CD8-positive, alpha-beta T cell (primary cell): ENCODE measurements at regions of chrX and their contacts with region 1.

Region 1: GRCh38 chrX:45769761-45770582 is 569.3 kb upstream of the DIPK2B start:
- DNase-seq: peak in 5 of 9 experiments; percentile 3 to 76 (median 24)
- ATAC-seq: peak; percentile 19
- H3K4me3 ChIP-seq: peak overlapping the region; percentile 38 to 57
- H3K4me3 Mint-ChIP-seq: peak overlapping the region; percentile 95
- H3K27ac ChIP-seq: peak overlapping the region; percentile 41 to 81
- H3K27ac Mint-ChIP-seq: peak overlapping the region; percentile 97
- H3K4me1 ChIP-seq: peaks cover 23% of the 10 kb centered on the region
- H3K4me1 Mint-ChIP-seq: peaks cover 64% of the 10 kb centered on the region
- H3K27me3 ChIP-seq: no peaks in the 10 kb centered on the region
- H3K27me3 Mint-ChIP-seq: no peaks in the 10 kb centered on the region
- CTCF ChIP-seq: no peak

Region 2: DNA sequence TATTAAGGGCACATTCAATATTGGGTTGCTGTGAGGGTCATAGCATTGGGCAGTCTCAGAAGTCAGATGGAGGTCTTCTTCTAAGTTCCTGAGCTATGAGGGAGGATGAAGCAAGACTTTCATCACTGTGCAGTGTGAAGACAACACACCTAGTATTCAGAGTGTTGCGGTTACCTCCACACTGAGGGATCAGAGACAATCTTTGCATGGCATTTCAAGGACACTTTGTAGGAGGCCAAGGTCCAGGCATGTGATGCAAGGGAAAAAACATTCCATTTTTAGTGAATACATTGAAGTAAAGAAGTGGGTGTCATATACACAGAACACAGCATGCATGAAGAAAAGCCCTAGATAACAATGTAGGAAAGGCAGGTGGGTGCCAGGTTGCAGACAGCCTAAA is 88.1 kb before region 1 on chrX:
- CTCF ChIA-PET with region 1: no interaction called
- POLR2A ChIA-PET with region 1: no interaction called
- intact Hi-C with region 1: no loop called
- DNase-seq: no peak
- ATAC-seq: no peak
- H3K4me3 ChIP-seq: no peak overlapping the region
- H3K4me3 Mint-ChIP-seq: no peak overlapping the region
- H3K27ac ChIP-seq: no peak overlapping the region
- H3K27ac Mint-ChIP-seq: no peak overlapping the region
- H3K4me1 ChIP-seq: no peaks in the 10 kb centered on the region
- H3K4me1 Mint-ChIP-seq: no peaks in the 10 kb centered on the region
- H3K27me3 ChIP-seq: no peaks in the 10 kb centered on the region
- H3K27me3 Mint-ChIP-seq: no peaks in the 10 kb centered on the region
- CTCF ChIP-seq: no peak

Region 3: DNA sequence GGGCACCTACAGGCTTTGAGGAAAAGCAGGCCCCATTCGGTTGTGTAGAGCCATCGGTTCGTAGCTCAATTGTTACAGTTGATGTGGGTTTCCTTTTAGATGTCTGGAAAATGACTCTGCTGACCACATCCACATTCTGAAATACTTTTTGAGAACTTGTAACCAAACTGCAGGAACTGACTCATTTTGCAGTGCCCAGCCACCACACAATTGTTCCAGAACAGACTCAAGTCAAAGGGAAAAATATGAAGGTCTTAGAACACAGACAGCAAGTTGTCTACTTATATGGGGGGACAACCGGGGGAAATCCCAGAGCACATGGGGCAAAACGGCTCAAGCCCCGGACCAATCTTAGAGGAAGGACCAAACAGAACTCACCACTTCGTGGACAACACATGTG is 11.7 kb before region 1 on chrX:
- CTCF ChIA-PET with region 1: no interaction called
- POLR2A ChIA-PET with region 1: interaction called, 14 read pairs
- intact Hi-C with region 1: loop called in 1 of 2 experiments (anchors 2 kb)
- DNase-seq: peak in 6 of 9 experiments; percentile 17 to 73 (median 33)
- ATAC-seq: peak; percentile 45
- H3K4me3 ChIP-seq: peak overlapping the region in 1 of 2 experiments; percentile 26
- H3K4me3 Mint-ChIP-seq: peak overlapping the region; percentile 76
- H3K27ac ChIP-seq: peak overlapping the region; percentile 4 to 74
- H3K27ac Mint-ChIP-seq: peak overlapping the region; percentile 95
- H3K4me1 ChIP-seq: peaks cover 35% of the 10 kb centered on the region
- H3K4me1 Mint-ChIP-seq: peaks cover 59% of the 10 kb centered on the region
- H3K27me3 ChIP-seq: no peaks in the 10 kb centered on the region
- H3K27me3 Mint-ChIP-seq: no peaks in the 10 kb centered on the region
- CTCF ChIP-seq: no peak

Region 4: GRCh38 chrX:45806410-45807121 is 36.6 kb after region 1 on chrX:
- CTCF ChIA-PET with region 1: interaction called, 7 read pairs
- POLR2A ChIA-PET with region 1: interaction called, 31 read pairs
- intact Hi-C with region 1: loop called (anchors 2 kb)
- DNase-seq: peak; percentile 1 to 88 (median 37)
- ATAC-seq: peak; percentile 78
- H3K4me3 ChIP-seq: peak overlapping the region; percentile 27 to 46
- H3K4me3 Mint-ChIP-seq: peak overlapping the region; percentile 81
- H3K27ac ChIP-seq: peak overlapping the region; percentile 87 to 90
- H3K27ac Mint-ChIP-seq: peak overlapping the region; percentile 98
- H3K4me1 ChIP-seq: peaks cover 16% of the 10 kb centered on the region
- H3K4me1 Mint-ChIP-seq: peaks cover 43% of the 10 kb centered on the region
- H3K27me3 ChIP-seq: no peaks in the 10 kb centered on the region
- H3K27me3 Mint-ChIP-seq: no peaks in the 10 kb centered on the region
- CTCF ChIP-seq: no peak

Region 5: DNA sequence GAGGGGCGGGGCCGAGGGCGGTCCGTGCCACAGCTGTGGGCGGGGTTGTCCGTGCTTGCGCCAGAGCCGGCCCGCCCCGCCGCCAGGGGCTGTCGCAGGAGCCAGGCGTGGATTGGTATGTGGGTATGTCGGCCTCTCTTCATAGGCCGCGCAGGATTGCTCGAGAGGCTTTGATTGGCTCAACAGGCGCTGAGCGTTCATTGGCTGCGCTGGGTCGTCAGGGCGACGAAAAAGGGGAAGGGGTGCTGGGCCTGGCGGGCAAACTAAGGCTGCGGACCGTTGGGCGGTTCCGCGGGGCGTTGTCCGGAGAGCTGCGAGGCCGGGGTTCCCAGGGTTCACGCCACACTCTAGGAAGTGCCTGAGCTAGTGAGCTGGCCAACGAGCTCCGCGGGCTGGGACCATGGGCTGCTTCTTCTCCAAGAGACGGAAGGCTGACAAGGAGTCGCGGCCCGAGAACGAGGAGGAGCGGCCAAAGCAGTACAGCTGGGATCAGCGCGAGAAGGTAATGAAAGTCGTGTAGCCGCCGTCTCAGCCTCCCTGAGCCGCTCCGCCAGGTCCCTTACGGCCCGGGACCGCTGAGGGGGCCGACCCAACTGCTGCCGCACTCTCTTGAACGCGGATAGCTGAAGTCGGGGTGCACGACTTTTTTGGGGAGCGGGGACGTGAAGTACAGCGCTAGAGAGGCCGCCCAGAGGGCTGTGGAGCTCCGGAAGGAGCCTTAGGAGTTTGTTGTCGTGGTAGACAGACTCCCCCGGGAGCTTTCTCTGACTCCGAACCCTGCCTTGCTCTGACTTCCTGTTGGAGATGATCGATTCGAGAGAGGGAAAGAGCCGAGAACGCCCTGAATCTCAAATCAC is 1067.0 kb after region 1 on chrX and contains the start of gene RP2:
- CTCF ChIA-PET with region 1: no interaction called
- POLR2A ChIA-PET with region 1: no interaction called
- intact Hi-C with region 1: loop called in 1 of 2 experiments (anchors 10 kb)
- DNase-seq: peak; percentile 61 to 92 (median 86)
- ATAC-seq: peak; percentile 95
- H3K4me3 ChIP-seq: peak within 1 kb of the TSS; percentile 95 to 96
- H3K4me3 Mint-ChIP-seq: peak within 1 kb of the TSS; percentile 97
- H3K27ac ChIP-seq: peak within 1 kb of the TSS; percentile 82 to 91
- H3K27ac Mint-ChIP-seq: peak within 1 kb of the TSS; percentile 95
- H3K4me1 ChIP-seq: peaks cover 15% of the 10 kb centered on the region
- H3K4me1 Mint-ChIP-seq: peaks cover 24% of the 10 kb centered on the region
- H3K27me3 ChIP-seq: no peaks in the 10 kb centered on the region
- H3K27me3 Mint-ChIP-seq: no peaks in the 10 kb centered on the region
- CTCF ChIP-seq: no peak
- total RNA-seq, gene RP2: 4.4 to 4.9 TPM